ENCODE measurements at regions of chr5 and their contacts with region 1.

Region 1: DNA sequence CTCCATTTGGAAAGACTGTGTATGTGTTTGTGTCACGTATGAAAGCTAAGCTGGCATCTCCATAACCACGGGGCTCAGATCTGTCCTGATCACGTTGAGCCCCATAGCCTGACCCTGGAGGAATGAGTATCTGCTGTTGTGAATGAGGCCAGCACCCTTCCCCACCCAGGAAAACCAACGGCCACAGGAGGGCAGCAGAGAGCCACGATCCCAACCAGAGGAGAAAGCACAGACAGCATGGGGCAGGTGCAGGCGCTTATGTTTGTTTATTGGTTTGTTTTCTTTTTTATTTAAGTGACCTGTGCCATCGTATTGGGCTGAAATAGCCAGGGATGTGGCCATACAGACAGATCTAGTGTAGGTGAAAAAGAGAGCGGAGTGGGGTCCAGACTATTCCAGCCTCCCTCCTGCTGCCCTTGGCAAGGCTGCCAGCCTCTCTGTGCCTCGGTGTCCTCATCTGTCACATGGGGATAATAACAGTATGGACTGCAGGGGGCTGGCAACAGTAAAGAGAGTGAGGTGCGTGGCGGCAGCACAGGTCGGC is 12.0 kb downstream of the OR2V2 start:
- DNase-seq: peak; percentile 91
- ATAC-seq: peak; percentile 94

Region 2: DNA sequence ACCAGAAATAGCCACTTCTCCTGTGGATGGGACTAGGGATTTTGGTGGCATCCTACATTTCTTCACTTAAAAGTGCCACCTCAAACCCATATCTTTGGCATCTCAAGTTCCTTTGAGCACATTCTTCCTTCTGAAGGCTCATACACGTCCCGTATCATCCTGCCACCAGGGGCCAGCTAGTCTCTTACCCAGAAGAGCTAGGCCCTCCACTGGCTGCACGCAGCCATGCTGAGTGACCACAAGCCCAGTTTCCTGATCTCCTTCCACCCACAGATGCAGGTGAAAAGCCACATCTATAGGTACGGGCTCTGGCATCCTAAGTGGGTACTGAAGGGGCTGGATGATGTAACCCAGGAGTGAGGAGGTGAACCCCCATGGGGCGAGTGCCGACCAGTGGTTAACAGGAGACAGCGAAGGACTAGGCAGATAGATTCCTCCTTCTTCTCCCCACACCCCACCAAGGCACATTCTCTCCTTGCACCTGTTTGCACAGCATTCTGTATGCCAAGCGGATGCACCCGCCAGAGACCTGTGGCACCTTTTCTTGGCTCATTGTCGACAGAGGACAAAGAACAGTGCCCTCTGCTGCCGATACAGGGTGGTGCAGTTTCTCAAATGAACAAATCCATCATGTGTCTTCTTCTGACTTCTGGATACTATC is 553.7 kb before region 1 on chr5:
- intact Hi-C with region 1: no loop called
- DNase-seq: peak; percentile 55
- ATAC-seq: no peak

Region 3: DNA sequence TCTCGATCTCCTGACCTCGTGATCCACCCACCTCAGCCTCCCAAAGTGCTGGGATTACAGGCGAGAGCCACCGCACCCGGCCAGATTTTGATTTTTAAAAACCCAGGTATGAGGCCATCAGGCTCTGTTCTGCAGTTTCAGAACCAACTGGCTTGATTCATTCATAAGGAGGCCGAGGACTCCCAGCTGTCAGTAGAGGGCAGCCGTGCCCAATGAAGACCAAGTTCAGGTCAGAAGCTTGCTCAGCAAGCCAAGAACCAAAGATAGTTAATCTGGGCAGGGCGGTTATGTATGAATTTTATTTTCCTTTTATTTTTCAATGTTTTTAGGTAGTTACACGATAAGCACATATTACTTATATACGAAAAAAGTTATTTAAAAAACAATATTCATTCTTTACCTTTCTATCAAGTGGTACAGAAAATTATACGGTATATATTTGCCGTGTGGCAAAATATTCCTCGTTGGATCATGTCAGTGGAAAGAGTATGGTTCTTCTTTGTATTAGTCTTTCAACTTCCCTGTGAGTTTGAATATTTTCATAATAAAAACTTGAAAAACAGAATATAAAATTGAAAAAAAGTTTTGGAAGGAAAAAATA is 374.8 kb before region 1 on chr5:
- intact Hi-C with region 1: loop called (anchors 10 kb)
- DNase-seq: no peak
- ATAC-seq: peak; percentile 83